Sigmoid colon (tissue), 7 donors: ENCODE measurements at regions of chr5 and their contacts with region 1.

Region 1: DNA sequence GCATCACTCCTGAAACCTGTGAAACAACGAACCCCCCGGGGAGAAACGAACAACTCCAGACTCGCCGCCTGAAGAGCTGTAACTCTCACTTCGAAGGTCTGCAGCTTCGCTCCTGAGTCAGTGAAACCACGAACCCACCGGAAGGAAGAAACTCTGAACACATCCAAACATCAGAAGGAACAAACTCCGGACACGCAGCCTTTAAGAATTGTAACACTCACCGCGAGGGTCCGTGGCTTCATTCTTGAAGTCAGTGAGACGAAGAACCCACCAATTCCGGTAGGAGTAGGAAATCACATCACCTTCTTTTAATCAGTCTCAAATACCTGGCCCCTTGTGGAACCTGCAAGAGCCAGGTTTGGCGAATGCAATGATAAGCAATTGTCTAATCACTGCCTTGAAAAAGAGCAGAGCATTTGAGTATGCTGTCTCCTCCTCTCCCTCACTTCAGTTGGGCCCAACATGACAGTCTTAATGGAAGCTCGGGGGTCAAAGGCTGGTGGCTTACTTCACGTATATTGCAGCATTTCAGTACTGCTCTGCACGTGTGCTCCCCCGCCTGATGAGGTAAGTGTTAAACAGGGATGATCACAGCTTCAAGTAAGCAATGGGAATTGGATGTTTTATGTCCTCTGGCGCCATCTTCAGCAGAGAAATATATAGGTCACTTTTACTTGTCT is 473 bp downstream of the IRGM start:
- DNase-seq: peak; percentile 75
- H3K4me3 ChIP-seq: no peak overlapping the region
- H3K27ac ChIP-seq: no peak overlapping the region
- H3K4me1 ChIP-seq: no peaks in the 10 kb centered on the region
- H3K27me3 ChIP-seq: no peaks in the 10 kb centered on the region
- CTCF ChIP-seq: peak; percentile 52 to 66 (median 56)
- EP300 ChIP-seq: no peak
- POLR2A ChIP-seq: no peak

Region 2: DNA sequence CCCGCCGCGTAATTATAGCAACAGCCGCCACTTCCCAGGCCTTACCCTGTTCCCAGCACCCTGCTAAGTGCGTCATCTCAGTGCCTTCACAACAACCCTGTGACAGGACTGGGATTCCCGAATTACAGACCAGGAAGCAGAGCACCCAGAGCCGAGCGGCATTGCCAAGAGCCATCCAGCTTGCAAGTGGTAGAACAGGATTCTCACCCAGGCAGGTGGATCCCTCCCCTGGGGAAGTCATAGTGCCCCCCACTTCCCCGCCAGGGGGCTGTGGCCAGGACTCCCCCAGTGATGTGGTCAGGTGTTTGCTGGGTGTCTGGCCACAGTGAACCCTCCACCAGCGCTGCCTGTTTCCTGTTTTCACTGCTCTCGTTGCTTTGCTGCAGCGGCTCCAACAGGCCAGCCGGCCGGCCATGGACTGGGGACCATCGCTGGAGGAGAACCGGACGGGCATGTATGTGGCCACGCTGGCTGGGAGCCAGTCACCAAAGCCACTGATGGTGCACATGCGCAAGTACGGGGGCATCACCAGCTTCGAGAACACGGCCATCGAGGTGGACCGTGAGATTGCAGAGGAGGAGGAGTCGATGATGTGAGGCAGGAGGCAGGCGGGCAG is 637.7 kb before region 1 on chr5:
- intact Hi-C with region 1: no loop called
- DNase-seq: no peak
- H3K4me3 ChIP-seq: no peak overlapping the region
- H3K27ac ChIP-seq: no peak overlapping the region
- H3K4me1 ChIP-seq: no peaks in the 10 kb centered on the region
- H3K27me3 ChIP-seq: no peaks in the 10 kb centered on the region
- CTCF ChIP-seq: no peak
- EP300 ChIP-seq: no peak
- POLR2A ChIP-seq: no peak

Region 3: DNA sequence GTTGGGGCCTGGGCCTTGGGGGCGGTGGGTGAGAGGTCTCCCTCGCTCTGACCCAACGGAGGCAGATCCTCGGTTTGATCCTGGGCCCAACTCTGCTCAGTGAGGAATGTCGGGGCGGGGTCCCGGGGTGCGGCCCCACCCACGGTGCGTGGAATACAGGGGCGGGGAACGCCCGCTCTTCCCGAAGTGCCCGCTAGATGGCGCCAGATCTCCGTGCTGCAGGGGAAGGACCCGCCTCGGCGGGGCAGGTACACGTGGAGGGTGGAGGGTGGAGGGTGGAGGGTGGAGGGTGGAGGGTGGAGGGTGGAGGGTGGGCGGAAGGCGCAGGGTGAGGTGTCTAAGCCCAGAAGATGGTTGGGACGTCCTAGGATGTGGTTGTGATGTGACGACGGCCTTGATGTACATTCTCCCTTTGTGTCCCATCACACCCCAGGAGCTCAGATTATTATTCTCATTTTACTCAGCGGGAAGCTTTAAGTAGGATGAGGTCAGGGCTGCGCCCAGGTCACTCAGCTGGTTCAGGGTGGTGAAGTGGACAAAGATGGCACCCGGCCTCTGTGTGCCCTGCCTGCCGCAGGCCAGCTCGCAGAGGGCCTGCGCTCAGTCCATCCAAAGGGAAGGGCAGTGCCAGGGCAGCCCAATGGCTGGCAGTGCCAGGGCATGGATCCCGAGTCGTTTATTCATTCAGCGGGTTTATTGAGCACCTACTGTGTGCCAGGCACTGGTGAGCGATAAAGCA is 387.8 kb before region 1 on chr5:
- intact Hi-C with region 1: loop called (anchors 5 kb)
- DNase-seq: peak; percentile 88
- H3K4me3 ChIP-seq: peak overlapping the region in 2 of 4 donors; percentile 13 to 34
- H3K27ac ChIP-seq: peak overlapping the region in 2 of 4 donors; percentile 3 to 41
- H3K4me1 ChIP-seq: peaks cover 0 to 12% (median 8%) of the 10 kb centered on the region in 4 donors
- H3K27me3 ChIP-seq: no peaks in the 10 kb centered on the region
- CTCF ChIP-seq: peak; percentile 51 to 92 (median 60)
- EP300 ChIP-seq: no peak
- POLR2A ChIP-seq: no peak

Region 4: GRCh38 chr5:150560401-150561193 is 286.2 kb before region 1 on chr5:
- intact Hi-C with region 1: loop called (anchors 2 kb)
- DNase-seq: peak; percentile 93
- H3K4me3 ChIP-seq: no peak overlapping the region
- H3K27ac ChIP-seq: no peak overlapping the region
- H3K4me1 ChIP-seq: peaks cover 0 to 13% (median 3%) of the 10 kb centered on the region in 4 donors
- H3K27me3 ChIP-seq: no peaks in the 10 kb centered on the region
- CTCF ChIP-seq: peak; percentile 87 to 96 (median 89)
- EP300 ChIP-seq: no peak
- POLR2A ChIP-seq: no peak

Region 5: GRCh38 chr5:150700594-150701293 is 146.1 kb before region 1 on chr5 and contains the start of gene RBM22:
- intact Hi-C with region 1: loop called (anchors 2 kb)
- DNase-seq: peak; percentile 96
- H3K4me3 ChIP-seq: peak within 1 kb of the TSS; percentile 75 to 96 (median 92)
- H3K27ac ChIP-seq: peak within 1 kb of the TSS; percentile 94 to 98 (median 96)
- H3K4me1 ChIP-seq: peaks cover 0 to 22% (median 16%) of the 10 kb centered on the region in 4 donors
- H3K27me3 ChIP-seq: no peaks in the 10 kb centered on the region
- CTCF ChIP-seq: peak; percentile 52 to 73 (median 63)
- EP300 ChIP-seq: peak in 1 of 4 donors; percentile 18
- POLR2A ChIP-seq: peak; percentile 56 to 60
- total RNA-seq, gene RBM22: 30.0 to 34.1 (median 31.8) TPM

Region 6: GRCh38 chr5:150801117-150801927 is 45.5 kb before region 1 on chr5:
- intact Hi-C with region 1: loop called (anchors 1 kb)
- DNase-seq: no peak
- H3K4me3 ChIP-seq: peak overlapping the region; percentile 2 to 39 (median 28)
- H3K27ac ChIP-seq: peak overlapping the region; percentile 38 to 70 (median 60)
- H3K4me1 ChIP-seq: peaks cover 0 to 9% (median 3%) of the 10 kb centered on the region in 4 donors
- H3K27me3 ChIP-seq: no peaks in the 10 kb centered on the region
- CTCF ChIP-seq: peak; percentile 39 to 59 (median 52)
- EP300 ChIP-seq: no peak
- POLR2A ChIP-seq: no peak

Region 7: DNA sequence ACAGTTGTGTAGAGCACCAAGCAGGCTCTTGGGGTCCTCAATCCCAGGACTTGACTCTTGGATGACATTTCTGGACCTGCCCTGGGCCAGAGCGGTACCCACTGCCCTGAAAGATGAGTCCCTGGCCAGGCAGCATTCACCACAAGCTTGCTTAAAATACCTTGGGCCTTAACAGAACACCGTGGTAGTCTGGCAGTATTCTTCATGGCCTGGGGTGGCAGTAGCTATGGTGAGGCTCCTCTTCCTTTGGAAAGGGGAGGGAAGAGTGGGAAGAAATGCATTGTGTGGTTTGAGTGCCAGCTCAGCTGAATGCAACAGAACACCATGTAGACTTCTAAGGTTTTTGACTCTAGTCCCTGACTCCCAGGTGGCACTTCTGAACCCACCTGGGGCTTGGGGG is 29.8 kb before region 1 on chr5:
- intact Hi-C with region 1: loop called (anchors 2 kb)
- DNase-seq: no peak
- H3K4me3 ChIP-seq: no peak overlapping the region
- H3K27ac ChIP-seq: no peak overlapping the region
- H3K4me1 ChIP-seq: no peaks in the 10 kb centered on the region
- H3K27me3 ChIP-seq: no peaks in the 10 kb centered on the region
- CTCF ChIP-seq: no peak
- EP300 ChIP-seq: no peak
- POLR2A ChIP-seq: no peak

Region 8: DNA sequence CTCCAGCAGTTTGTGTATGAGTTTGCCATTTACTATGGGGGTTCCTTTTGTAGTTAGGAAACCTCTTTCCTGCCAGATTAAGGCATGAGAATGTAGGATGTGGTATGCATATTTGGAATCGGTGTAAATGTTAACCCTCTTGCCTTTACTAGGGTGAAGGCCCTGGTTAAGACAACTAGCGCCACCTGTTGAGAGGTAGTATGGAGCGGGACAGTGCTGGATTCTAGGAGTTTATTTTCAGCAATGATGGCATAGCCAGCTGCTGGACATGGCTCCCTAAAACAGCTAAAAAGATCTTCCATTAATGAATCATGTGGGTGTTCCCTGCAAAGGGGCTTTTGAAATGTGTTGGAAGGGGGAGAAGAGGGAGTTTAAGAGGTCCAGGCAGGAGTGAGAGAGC is 142.9 kb after region 1 on chr5:
- intact Hi-C with region 1: no loop called
- DNase-seq: no peak
- H3K4me3 ChIP-seq: no peak overlapping the region
- H3K27ac ChIP-seq: no peak overlapping the region
- H3K4me1 ChIP-seq: no peaks in the 10 kb centered on the region
- H3K27me3 ChIP-seq: no peaks in the 10 kb centered on the region
- CTCF ChIP-seq: no peak
- EP300 ChIP-seq: no peak
- POLR2A ChIP-seq: no peak